OCI-LY7 (cell line): ENCODE measurements at regions of chr16 and their contacts with region 1.

Region 1: DNA sequence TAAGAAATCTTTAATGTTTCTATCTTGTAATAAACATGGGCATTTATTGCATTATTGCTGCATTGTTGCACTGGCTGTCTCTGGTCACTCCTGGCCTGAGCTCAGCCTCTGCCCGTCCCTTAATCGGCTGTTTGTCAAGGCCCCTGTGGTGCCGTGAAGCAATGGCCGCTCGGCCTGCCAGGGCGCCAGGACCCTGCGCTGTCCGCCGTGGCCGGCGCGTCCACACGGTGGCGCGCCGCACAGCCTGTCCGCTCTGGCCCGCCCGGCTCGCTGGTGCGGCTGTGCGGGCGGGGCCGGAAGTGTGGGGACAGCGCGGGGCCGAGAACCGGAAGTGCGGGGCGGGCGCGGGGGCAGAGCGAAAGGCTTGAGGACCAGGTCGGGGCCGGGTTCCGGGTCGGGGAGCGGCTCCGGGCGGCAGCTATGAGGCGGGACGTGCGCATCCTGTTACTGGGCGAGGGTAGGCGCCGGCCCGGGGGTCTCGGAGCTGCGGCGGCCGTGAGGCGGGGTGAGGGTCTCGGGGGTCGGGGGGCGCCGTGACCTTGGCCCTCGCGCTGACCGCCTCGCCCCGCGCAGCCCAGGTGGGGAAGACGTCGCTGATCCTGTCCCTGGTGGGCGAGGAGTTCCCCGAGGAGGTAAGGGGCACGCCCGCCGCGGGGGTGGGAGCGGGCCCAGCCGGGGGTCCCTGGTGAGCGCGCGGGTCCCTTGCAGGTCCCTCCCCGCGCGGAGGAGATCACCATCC is at the start of gene RHOT2:
- DNase-seq: peak; percentile 94
- H3K4me3 ChIP-seq: peak within 1 kb of the TSS; percentile 99
- H3K27ac ChIP-seq: peak within 1 kb of the TSS; percentile 52
- H3K4me1 ChIP-seq: peaks cover 14% of the 10 kb centered on the region
- CTCF ChIP-seq: peak; percentile 94
- total RNA-seq, gene RHOT2: 129 and 136 TPM in 2 replicates

Region 2: DNA sequence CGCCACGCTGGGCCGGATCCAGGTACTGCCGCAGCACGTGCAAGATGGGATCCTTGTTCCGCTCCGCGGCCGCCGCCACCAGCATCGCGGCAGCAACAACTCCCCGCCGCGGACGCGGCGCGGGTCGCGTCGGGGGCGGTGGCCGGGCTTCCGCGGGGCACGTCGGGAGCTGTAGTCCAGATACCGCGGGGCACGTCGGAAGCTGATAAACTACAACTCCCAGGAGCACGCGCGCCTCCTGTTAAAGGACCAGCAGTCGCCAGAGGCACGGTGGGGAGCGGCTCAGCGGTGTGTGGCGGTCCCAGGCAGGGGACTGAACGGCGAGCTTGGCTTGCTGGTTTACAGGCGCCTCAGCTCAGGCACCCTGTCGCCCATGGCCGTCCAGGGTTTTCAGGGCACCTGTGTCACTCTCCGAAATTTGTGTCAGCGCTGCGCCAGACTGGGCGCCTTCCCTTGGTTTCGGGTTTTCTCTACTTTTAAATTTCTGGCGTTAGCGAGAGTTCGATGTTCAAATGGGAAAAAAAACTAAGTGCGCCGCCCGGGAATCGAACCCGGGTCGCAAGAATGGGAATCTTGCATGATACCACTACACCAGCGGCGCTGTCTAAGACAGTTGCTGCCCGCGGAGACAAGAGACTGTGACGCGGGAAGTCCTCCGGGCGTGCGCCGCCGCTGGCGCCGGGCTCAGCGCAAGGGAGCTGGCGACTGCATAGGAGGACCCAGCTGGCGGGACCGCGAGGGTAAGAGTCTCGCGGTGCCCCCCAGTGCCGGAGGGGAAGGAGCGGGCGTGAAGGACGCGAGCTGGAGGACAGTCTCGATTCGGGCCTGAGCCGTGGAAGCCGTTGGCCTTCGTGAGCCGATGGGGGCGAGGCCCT is 31.5 kb before region 1 on chr16 and contains the start of gene METTL26:
- CTCF ChIA-PET with region 1: no interaction called
- POLR2A ChIA-PET with region 1: no interaction called
- intact Hi-C with region 1: loop called (anchors 1 kb)
- DNase-seq: peak; percentile 96
- H3K4me3 ChIP-seq: peak within 1 kb of the TSS; percentile 87
- H3K27ac ChIP-seq: peak within 1 kb of the TSS; percentile 77
- H3K4me1 ChIP-seq: peaks cover 46% of the 10 kb centered on the region
- CTCF ChIP-seq: no peak
- total RNA-seq, gene METTL26: 135 and 152 TPM in 2 replicates

Region 3: DNA sequence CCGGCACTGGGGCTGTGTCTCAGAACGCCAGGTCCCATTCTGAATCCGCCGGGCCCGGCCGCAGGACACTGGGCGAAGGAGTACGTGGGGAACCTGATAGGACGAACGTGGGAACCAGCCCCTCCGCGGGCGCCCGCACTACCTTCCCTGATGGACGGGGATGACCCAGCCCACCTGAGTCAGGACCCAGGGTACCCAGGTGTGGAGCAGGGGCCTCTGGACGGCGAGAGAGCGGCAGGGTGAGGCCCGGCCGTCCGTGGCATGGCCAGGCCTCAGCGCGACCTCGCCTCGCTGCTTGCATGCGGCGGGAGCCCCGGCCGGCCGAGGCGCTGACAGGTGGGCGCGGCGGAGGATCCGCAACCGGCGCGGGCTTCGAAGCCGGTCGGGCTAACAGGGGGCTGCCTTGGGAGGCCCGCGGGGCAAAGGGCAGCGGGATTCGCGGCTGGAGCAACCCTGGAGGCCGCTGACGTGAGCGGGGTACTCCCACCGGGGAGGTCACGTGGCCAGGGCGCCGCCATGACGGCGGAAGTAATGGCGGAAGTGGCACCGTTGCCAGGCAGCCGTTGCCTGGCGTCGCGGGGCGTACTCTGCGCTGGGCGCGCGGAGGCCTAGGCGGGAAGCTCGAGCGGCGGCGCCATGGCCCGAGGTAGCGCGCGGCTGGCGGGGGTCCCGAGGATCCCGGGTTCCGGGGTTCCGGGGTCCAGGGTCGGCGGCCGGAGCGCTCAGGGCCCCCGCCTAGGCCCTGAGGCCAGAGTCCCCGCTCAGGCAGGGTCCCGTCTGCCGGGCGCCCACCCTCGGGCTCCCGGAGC is 19.0 kb before region 1 on chr16 and contains the start of gene WDR90:
- CTCF ChIA-PET with region 1: no interaction called
- POLR2A ChIA-PET with region 1: no interaction called
- intact Hi-C with region 1: loop called (anchors 2 kb)
- DNase-seq: peak; percentile 94
- H3K4me3 ChIP-seq: peak within 1 kb of the TSS; percentile 70
- H3K27ac ChIP-seq: peak within 1 kb of the TSS; percentile 66
- H3K4me1 ChIP-seq: peaks cover 25% of the 10 kb centered on the region
- CTCF ChIP-seq: no peak
- total RNA-seq, gene WDR90: 77.6 and 110 TPM in 2 replicates

Region 4: GRCh38 chr16:684067-684794 is 16.3 kb after region 1 on chr16 and contains the start of gene JMJD8:
- CTCF ChIA-PET with region 1: no interaction called
- POLR2A ChIA-PET with region 1: interaction called, 4 read pairs
- intact Hi-C with region 1: loop called (anchors 1 kb)
- DNase-seq: peak; percentile 97
- H3K4me3 ChIP-seq: peak within 1 kb of the TSS; percentile 83
- H3K27ac ChIP-seq: peak within 1 kb of the TSS; percentile 33
- H3K4me1 ChIP-seq: peaks cover 36% of the 10 kb centered on the region
- CTCF ChIP-seq: no peak
- total RNA-seq, gene JMJD8: 70.6 and 82.3 TPM in 2 replicates